Panc1 (cell line): ENCODE measurements at regions of chr7 and their contacts with region 1.

Region 1: DNA sequence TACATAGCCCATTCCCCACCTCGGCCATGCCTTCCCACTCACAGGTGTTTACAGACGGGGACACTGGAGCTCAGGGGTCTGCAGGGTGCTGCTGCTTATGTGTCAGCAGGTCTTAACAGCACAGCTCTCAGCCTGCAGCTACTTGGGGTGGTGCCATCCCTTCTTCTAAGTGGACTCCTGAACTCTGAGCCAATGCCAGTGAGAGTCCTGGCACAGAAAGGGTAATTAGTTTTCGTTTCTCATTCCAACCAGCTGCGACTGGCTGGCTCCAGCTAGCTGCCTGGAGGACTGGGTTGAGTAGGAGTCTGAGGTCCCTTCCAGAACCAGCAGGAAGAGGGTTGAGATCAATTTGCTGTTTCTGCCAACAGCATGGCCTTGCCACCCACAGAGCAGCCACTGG is 88.3 kb upstream of the AGK start:
- DNase-seq: no peak
- ATAC-seq: no peak
- H3K4me3 ChIP-seq: no peak overlapping the region
- H3K27ac ChIP-seq: no peak overlapping the region
- H3K4me1 ChIP-seq: no peaks in the 10 kb centered on the region
- H3K27me3 ChIP-seq: no peaks in the 10 kb centered on the region; the same call in 1 of the 2 replicates
- CTCF ChIP-seq: no peak

Region 2: GRCh38 chr7:141342621-141343408 is 120.1 kb before region 1 on chr7:
- CTCF ChIA-PET with region 1: no interaction called
- POLR2A ChIA-PET with region 1: interaction called, 10 read pairs
- in situ Hi-C with region 1: no loop called
- intact Hi-C with region 1: no loop called
- DNase-seq: no peak
- ATAC-seq: no peak
- H3K4me3 ChIP-seq: no peak overlapping the region
- H3K27ac ChIP-seq: no peak overlapping the region
- H3K4me1 ChIP-seq: no peaks in the 10 kb centered on the region
- H3K27me3 ChIP-seq: peaks cover 6% of the 10 kb centered on the region; the same call in 1 of the 2 replicates
- CTCF ChIP-seq: no peak

Region 3: GRCh38 chr7:141477865-141478264 is 14.9 kb after region 1 on chr7:
- CTCF ChIA-PET with region 1: no interaction called
- POLR2A ChIA-PET with region 1: no interaction called
- in situ Hi-C with region 1: no loop called
- intact Hi-C with region 1: no loop called
- DNase-seq: no peak
- ATAC-seq: no peak
- H3K4me3 ChIP-seq: no peak overlapping the region
- H3K27ac ChIP-seq: no peak overlapping the region
- H3K4me1 ChIP-seq: no peaks in the 10 kb centered on the region
- H3K27me3 ChIP-seq: peaks cover 7% of the 10 kb centered on the region
- CTCF ChIP-seq: no peak

Region 4: GRCh38 chr7:141563956-141564631 is 101.1 kb after region 1 on chr7:
- CTCF ChIA-PET with region 1: no interaction called
- POLR2A ChIA-PET with region 1: no interaction called
- in situ Hi-C with region 1: no loop called
- intact Hi-C with region 1: no loop called
- DNase-seq: no peak
- ATAC-seq: no peak
- H3K4me3 ChIP-seq: no peak overlapping the region
- H3K27ac ChIP-seq: no peak overlapping the region
- H3K4me1 ChIP-seq: no peaks in the 10 kb centered on the region
- H3K27me3 ChIP-seq: no peaks in the 10 kb centered on the region
- CTCF ChIP-seq: no peak